ENCODE measurements at regions of chr10 and their contacts with region 1.

Region 1: DNA sequence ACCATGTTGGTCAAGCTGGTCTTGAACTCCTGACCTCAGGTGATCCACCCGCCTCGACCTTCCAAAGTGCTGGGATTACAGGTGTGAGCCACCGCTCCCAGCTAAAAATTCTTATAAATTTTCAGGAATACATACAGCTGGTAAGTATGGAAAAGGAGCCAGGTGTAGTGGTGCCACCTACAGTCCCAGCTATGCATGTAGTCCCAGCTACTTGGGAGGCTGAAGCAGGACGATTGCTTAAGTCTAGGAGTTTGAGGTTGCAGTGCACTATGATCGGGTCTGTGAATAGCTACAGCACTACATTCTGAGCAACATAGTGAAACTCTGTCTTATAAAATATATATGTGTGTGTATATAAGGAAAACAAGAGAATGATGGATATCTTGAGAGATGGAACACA is 19.0 kb downstream of the LDB1 start:
- DNase-seq: peak; percentile 39
- ATAC-seq: peak; percentile 93
- H3K4me3 ChIP-seq: no peak overlapping the region
- H3K27ac ChIP-seq: no peak overlapping the region
- H3K4me1 ChIP-seq: no peaks in the 10 kb centered on the region
- H3K27me3 ChIP-seq: no peaks in the 10 kb centered on the region
- CTCF ChIP-seq: peak; percentile 52 to 71 (median 53); a peak in 5 of 6 replicates
- POLR2A ChIP-seq: no peak
- RAD21 ChIP-seq: peak; percentile 69

Region 2: DNA sequence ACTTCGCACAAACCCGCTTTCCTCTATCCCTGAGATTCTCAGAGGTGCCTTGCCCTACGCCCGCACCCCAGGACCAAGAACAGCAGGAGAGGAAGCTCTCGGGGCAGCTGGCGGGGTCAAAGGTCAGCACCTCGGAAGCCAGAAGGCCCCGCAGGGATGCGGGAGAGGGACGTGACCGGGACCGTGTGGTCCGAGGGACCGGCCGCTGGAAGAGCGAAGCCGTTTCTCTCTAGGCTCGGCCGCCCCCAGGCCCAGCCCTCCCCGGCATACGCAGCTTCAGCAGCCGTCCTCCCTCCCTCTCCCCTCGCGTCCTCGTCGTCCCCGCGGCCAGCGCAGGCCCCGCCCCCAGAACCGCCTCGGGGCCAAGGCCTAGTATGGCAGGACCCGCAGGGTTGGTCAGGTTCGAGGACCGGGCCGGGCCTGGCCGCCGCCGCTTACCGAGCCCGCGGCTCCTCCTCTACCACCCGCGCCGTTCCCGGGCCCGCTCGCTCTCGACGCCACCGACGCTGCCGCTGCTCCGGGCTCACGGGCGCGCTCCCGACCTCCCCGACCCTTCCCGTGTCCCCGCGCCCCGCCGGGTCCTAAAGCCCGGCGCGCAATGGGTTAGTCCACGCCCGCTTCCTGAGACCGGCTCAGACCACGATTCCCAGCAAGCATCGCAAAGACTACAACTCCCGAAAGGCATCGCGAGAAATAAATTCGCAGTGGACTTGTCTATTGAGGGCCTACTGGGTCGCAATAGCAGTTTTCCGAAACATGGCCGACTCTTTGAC is 45.3 kb before region 1 on chr10 and contains the start of gene ARMH3:
- CTCF ChIA-PET with region 1: interaction called, 17 read pairs
- POLR2A ChIA-PET with region 1: interaction called, 3 read pairs
- RAD21 ChIA-PET with region 1: no interaction called
- intact Hi-C with region 1: no loop called
- DNase-seq: peak; percentile 99
- ATAC-seq: peak; percentile 85
- H3K4me3 ChIP-seq: peak within 1 kb of the TSS; percentile 77 to 91
- H3K27ac ChIP-seq: peak within 1 kb of the TSS; percentile 90
- H3K4me1 ChIP-seq: peaks cover 40 to 52% of the 10 kb centered on the region in 2 experiments
- H3K27me3 ChIP-seq: no peaks in the 10 kb centered on the region
- CTCF ChIP-seq: no peak
- POLR2A ChIP-seq: peak; percentile 84
- RAD21 ChIP-seq: no peak
- total RNA-seq, gene ARMH3: 30.4 TPM

Region 3: GRCh38 chr10:102114861-102115618 is 13.9 kb after region 1 on chr10:
- CTCF ChIA-PET with region 1: interaction called, 48 read pairs
- POLR2A ChIA-PET with region 1: interaction called, 5 read pairs
- RAD21 ChIA-PET with region 1: interaction called in 1 of 2 experiments, 3 read pairs
- intact Hi-C with region 1: no loop called
- DNase-seq: no peak
- ATAC-seq: peak; percentile 81
- H3K4me3 ChIP-seq: peak overlapping the region; percentile 82 to 83
- H3K27ac ChIP-seq: peak overlapping the region; percentile 53
- H3K4me1 ChIP-seq: peaks cover 60 to 69% of the 10 kb centered on the region in 2 experiments
- H3K27me3 ChIP-seq: no peaks in the 10 kb centered on the region
- CTCF ChIP-seq: no peak
- POLR2A ChIP-seq: peak; percentile 95
- RAD21 ChIP-seq: no peak

Region 4: DNA sequence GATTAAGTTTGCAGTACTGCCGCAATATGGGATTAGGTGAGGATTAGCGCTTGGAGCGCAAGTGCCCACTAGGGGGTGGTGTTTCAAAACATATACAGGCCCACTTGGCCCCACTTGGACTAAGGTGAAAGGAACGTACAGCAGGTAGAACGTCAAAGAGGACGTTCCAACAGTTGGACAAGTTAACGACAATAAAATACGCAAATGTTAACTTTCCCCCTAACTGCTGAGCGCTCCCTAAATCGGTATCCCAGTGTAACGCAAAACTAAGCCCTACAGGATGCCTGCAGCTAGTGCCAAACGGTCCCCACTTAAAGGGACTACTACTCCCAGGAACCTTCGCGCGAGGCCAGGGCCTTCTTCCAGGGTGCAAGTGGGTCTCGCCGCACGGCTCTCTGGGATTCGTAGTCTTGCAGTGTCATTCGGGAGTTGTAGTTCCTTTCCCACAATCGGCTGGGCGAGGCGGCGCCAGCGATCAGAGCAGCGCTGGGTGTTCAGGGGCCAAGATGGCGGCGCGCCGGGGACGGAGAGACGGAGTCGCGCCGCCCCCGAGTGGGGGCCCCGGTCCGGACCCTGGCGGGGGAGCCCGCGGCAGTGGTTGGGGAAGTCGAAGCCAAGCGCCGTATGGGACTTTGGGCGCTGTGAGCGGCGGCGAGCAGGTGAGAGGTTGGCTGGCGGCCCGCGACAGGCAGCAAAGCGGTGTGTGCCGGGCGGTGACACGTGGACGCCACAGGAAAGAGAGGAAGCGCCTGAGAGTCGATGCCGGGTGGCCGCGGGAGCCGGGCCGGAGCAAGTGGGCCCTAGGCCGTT is 31.6 kb after region 1 on chr10 and contains the start of gene PPRC1:
- CTCF ChIA-PET with region 1: no interaction called
- POLR2A ChIA-PET with region 1: no interaction called
- RAD21 ChIA-PET with region 1: no interaction called
- intact Hi-C with region 1: no loop called
- DNase-seq: peak; percentile 100
- ATAC-seq: peak; percentile 92
- H3K4me3 ChIP-seq: peak within 1 kb of the TSS; percentile 93
- H3K27ac ChIP-seq: peak within 1 kb of the TSS; percentile 98
- H3K4me1 ChIP-seq: peaks cover 27 to 41% of the 10 kb centered on the region in 2 experiments
- H3K27me3 ChIP-seq: no peaks in the 10 kb centered on the region
- CTCF ChIP-seq: peak in 2 of 3 experiments; percentile 96 to 99; a peak in 4 of 6 replicates
- POLR2A ChIP-seq: peak; percentile 74
- RAD21 ChIP-seq: no peak
- total RNA-seq, gene PPRC1: 93.0 TPM

Region 5: DNA sequence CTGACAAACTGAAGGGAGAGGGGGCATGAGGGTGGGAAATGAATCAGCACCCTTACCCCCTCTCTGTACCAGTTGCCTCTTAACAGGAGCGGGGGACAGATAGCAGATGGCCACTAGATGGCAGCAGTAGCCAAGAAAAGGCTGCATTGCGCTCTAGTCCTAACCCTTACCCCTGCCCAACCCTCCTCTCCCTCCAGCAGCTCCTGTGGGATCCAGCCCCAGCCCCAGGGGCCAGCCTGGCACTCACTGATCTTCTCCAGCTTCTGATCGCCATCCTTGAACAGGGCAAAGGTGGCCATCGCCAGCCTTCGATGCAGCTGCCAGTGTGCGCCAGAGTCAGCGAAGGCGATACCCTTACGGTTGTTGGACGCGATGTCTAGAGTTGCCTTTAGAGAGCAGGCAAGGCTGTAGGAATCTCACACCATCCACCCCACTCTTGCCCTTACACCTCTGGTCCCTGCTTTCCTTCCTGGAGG is 733.9 kb after region 1 on chr10:
- CTCF ChIA-PET with region 1: no interaction called
- POLR2A ChIA-PET with region 1: no interaction called
- RAD21 ChIA-PET with region 1: no interaction called
- intact Hi-C with region 1: no loop called
- DNase-seq: peak; percentile 77
- ATAC-seq: peak; percentile 100
- H3K4me3 ChIP-seq: no peak overlapping the region
- H3K27ac ChIP-seq: no peak overlapping the region
- H3K4me1 ChIP-seq: no peaks in the 10 kb centered on the region; a peak in 1 of 4 replicates
- H3K27me3 ChIP-seq: no peaks in the 10 kb centered on the region; the same call in 1 of the 2 replicates
- CTCF ChIP-seq: peak; percentile 92 to 99 (median 93)
- POLR2A ChIP-seq: no peak
- RAD21 ChIP-seq: peak; percentile 98

Measured in HCT116 (cell line).